WTC11 (cell line): ENCODE measurements at regions of chrX and their contacts with region 1.

Region 1: GRCh38 chrX:110159235-110159634 is 156.3 kb downstream of the TMEM164 start:
- DNase-seq: no peak
- ATAC-seq: no peak
- H3K4me3 Mint-ChIP-seq: no peak overlapping the region
- H3K27ac Mint-ChIP-seq: no peak overlapping the region
- H3K4me1 Mint-ChIP-seq: 0 out of 2 replicates have a peak, but pooled peaks cover 6% of the 10 kb centered on the region
- H3K27me3 Mint-ChIP-seq: no peaks in the 10 kb centered on the region
- CTCF ChIP-seq: no peak

Region 2: GRCh38 chrX:109709129-109709631 is 450.1 kb before region 1 on chrX:
- CTCF ChIA-PET with region 1: no interaction called
- POLR2A ChIA-PET with region 1: no interaction called
- DNase-seq: no peak
- ATAC-seq: no peak
- H3K4me3 Mint-ChIP-seq: no peak overlapping the region
- H3K27ac Mint-ChIP-seq: peak overlapping the region; percentile 36; the same call in 1 of the 2 replicates
- H3K4me1 Mint-ChIP-seq: peaks cover 16% of the 10 kb centered on the region
- H3K27me3 Mint-ChIP-seq: no peaks in the 10 kb centered on the region
- CTCF ChIP-seq: no peak

Region 3: GRCh38 chrX:110146521-110146920 is 12.7 kb before region 1 on chrX:
- CTCF ChIA-PET with region 1: interaction called, 19 read pairs
- POLR2A ChIA-PET with region 1: interaction called, 4 read pairs
- DNase-seq: peak; percentile 12
- ATAC-seq: peak; percentile 63
- H3K4me3 Mint-ChIP-seq: no peak overlapping the region
- H3K27ac Mint-ChIP-seq: no peak overlapping the region
- H3K4me1 Mint-ChIP-seq: peaks cover 13% of the 10 kb centered on the region
- H3K27me3 Mint-ChIP-seq: no peaks in the 10 kb centered on the region
- CTCF ChIP-seq: no peak

Region 4: DNA sequence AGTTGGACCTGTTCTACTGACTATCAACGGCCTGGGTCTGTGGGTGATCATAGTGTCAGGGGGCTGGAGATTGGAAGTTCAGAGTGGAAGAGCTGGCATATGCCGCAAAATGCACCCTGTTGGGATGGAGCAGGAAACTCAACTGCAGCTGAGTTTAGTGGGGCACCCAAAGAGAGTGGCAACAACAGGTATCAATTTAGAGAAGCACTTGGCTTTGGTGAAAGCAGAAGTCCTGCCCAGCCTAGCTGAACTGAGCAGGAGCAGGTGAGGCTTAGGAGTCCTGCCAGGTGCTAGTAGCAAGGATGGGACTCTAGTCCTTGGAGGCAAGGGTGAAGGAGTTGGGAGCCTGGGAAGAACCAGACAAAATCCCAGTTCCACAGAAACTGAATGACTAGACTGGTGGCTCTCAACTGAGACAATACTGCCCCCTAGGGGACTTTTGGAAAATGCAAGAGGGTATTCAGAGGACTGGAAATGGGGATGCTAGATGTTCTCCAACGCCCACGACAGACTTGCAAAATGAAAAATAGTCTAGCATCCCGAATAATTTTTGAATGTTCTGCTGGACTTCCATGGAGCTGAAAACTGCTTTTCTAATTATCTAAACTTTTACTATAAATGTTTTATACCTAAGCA is 248.8 kb after region 1 on chrX:
- CTCF ChIA-PET with region 1: interaction called, 59 read pairs
- POLR2A ChIA-PET with region 1: no interaction called
- DNase-seq: peak; percentile 41
- ATAC-seq: peak; percentile 70
- H3K4me3 Mint-ChIP-seq: no peak overlapping the region
- H3K27ac Mint-ChIP-seq: no peak overlapping the region
- H3K4me1 Mint-ChIP-seq: peaks cover 11% of the 10 kb centered on the region
- H3K27me3 Mint-ChIP-seq: no peaks in the 10 kb centered on the region
- CTCF ChIP-seq: peak; percentile 64

Region 5: GRCh38 chrX:110412971-110413721 is 253.9 kb after region 1 on chrX:
- CTCF ChIA-PET with region 1: interaction called, 59 read pairs
- POLR2A ChIA-PET with region 1: no interaction called
- DNase-seq: peak; percentile 73
- ATAC-seq: peak; percentile 96
- H3K4me3 Mint-ChIP-seq: peak overlapping the region; percentile 44
- H3K27ac Mint-ChIP-seq: no peak overlapping the region
- H3K4me1 Mint-ChIP-seq: peaks cover 12% of the 10 kb centered on the region
- H3K27me3 Mint-ChIP-seq: peaks cover 4% of the 10 kb centered on the region
- CTCF ChIP-seq: peak; percentile 75